ENCODE measurements at regions of chr18 and their contacts with region 1.

Region 1: DNA sequence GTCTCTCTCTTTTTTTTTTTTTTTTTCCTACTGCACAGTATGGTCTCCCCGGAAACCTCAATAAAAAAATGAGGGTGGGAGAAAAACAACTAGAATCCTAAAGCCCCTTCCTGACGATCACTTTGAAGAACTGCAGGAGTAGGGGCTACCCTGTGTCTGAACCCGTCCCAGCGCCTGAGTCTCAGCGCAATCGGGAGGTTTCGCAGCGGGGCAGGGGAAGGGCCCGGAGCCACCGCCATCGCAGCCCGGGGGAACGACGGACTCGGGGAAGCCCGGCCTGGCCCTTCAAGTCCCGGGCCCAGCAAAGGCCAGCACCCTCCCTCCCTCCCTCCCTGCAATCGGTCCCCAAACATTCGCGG is 411 bp downstream of the NARS1 start:
- DNase-seq: no peak
- ATAC-seq: peak; percentile 4
- H3K4me3 ChIP-seq: peak overlapping the region; percentile 85 to 90 (median 89)
- H3K4me3 Mint-ChIP-seq: peak overlapping the region; percentile 93
- H3K27ac ChIP-seq: peak overlapping the region; percentile 86 to 88
- H3K27ac Mint-ChIP-seq: peak overlapping the region; percentile 95
- H3K4me1 ChIP-seq: peaks cover 11 to 24% of the 10 kb centered on the region in 2 donors
- H3K4me1 Mint-ChIP-seq: peaks cover 32% of the 10 kb centered on the region
- H3K27me3 ChIP-seq: no peaks in the 10 kb centered on the region
- H3K27me3 Mint-ChIP-seq: no peaks in the 10 kb centered on the region
- CTCF ChIP-seq: no peak

Region 2: DNA sequence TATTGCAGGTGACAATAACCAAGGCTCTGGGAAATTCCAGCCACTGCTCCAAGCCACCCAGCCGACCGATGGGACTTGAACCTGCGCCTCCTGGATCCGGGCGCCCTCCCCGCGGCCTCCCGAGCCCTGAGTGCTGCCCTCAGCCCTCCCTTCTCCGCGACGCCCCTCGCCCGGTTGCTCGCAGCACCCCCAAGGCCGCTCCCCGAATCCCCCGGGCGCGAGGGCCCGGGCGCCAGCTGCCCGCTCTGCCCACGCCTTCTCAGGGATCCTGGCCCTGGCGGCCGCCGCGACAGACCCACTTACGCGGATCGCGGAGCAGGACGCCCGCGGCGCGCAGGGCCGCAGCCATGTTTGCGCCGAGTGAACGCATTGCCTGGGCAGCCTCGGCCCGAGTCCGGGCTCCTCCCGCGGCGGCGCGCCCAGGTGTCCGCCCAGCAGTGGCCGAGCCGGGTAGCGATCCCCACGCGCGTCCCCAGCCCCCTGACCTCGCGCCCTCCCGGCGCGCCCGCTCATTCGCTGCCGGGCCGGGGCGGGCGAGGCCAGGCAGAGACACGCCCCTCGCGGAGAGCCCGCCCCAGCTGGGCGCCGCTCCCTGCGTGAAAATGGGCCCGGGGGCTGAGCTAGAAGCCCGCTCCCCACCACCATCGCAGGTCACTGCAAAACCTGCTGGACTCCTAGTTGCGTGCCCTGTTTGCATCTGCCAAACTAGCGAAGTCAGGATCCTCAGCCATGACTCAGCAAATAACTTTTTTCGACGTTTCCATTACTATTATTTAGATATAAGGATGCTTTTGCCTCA is 34.8 kb before region 1 on chr18 and contains the start of gene FECH:
- CTCF ChIA-PET with region 1: no interaction called
- POLR2A ChIA-PET with region 1: interaction called, 4 read pairs
- intact Hi-C with region 1: loop called (anchors 2 kb)
- DNase-seq: peak; percentile 78
- ATAC-seq: peak; percentile 97
- H3K4me3 ChIP-seq: peak within 1 kb of the TSS; percentile 53 to 67 (median 63)
- H3K4me3 Mint-ChIP-seq: peak within 1 kb of the TSS; percentile 89
- H3K27ac ChIP-seq: peak within 1 kb of the TSS in 1 of 2 donors; percentile 70
- H3K27ac Mint-ChIP-seq: peak within 1 kb of the TSS; percentile 79
- H3K4me1 ChIP-seq: peaks cover 17 to 21% of the 10 kb centered on the region in 2 donors
- H3K4me1 Mint-ChIP-seq: peaks cover 18% of the 10 kb centered on the region
- H3K27me3 ChIP-seq: no peaks in the 10 kb centered on the region
- H3K27me3 Mint-ChIP-seq: no peaks in the 10 kb centered on the region
- CTCF ChIP-seq: no peak
- total RNA-seq, gene FECH: 10.4 and 12.6 TPM in 2 replicates

Region 3: DNA sequence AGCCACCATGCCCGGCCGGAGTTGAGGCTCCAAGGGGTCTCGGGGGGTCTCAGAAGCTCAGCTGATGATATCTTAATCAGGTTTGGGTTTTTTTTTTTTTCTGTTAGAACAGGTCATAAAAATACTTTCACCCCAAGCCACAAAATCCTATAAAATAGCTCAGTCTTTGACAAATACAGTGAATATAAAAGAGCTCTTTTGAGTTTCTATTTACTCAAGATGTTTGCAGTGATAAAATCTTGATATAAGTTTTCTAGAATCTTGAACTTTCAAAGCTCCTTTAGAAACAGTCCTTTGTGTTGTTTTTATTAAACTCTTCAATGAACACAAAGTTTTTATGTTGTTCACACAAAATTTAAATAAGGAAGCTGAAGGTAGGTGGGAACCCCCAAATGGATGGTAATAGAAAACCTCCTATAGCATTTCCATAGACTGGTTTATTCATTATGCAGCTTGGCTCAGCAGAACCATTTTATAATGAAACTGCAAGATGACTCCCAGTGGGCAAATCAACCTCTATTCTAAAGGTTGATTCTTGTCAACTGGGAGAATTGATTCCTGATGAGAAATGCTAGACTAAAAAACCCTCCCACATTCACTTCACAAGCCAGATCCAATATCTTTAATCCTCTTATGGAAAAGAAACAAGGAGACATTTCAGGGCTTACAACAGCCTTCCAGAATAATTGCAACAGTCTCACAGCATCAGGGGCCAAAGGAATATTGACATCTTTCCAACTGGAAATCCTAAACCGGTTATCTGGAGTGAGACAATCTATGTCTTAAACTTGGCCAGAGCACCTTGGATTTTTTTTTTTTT is 14.0 kb after region 1 on chr18:
- CTCF ChIA-PET with region 1: interaction called, 14 read pairs
- POLR2A ChIA-PET with region 1: interaction called, 35 read pairs
- intact Hi-C with region 1: loop called (anchors 1 kb)
- DNase-seq: no peak
- ATAC-seq: no peak
- H3K4me3 ChIP-seq: no peak overlapping the region
- H3K4me3 Mint-ChIP-seq: no peak overlapping the region
- H3K27ac ChIP-seq: peak overlapping the region in 1 of 2 donors; percentile 57
- H3K27ac Mint-ChIP-seq: peak overlapping the region; percentile 32
- H3K4me1 ChIP-seq: peaks cover 11 to 15% of the 10 kb centered on the region in 2 donors
- H3K4me1 Mint-ChIP-seq: peaks cover 35% of the 10 kb centered on the region
- H3K27me3 ChIP-seq: no peaks in the 10 kb centered on the region
- H3K27me3 Mint-ChIP-seq: no peaks in the 10 kb centered on the region
- CTCF ChIP-seq: no peak